ENCODE measurements at regions of chr1 and their contacts with region 1.

Region 1: DNA sequence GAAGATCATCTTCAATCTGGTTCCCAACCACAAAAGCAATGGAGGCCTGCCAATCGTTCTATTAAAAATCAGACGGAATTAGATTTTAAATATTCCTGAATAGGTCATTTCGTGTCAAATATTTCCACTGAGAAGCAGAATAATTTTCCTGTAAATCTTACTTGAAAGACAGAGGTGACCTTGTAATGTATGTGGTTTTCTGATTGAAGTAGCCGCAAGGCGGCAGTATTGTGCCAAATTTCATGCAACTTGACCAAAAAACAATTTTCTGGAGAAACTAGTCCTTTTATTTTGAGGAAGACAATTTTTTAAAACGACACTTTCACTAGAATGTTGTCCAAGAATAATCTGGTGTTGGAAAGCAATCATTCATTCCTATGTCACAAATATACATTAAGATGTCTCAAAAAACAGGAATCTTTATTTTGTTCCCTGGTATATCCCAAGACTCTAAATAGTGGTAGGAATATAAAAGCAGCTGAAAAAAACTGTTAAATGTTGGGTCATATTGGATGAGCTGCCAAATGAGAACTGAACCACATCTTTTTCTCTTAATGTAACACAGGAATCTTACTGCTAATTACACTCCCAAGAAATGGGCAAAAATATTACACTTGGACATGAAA is 33.6 kb downstream of the SPAG17 start:
- DNase-seq: peak; percentile 67
- ATAC-seq: no peak
- H3K4me3 ChIP-seq: no peak overlapping the region
- H3K27ac ChIP-seq: no peak overlapping the region
- H3K4me1 ChIP-seq: peaks cover 3% of the 10 kb centered on the region
- H3K27me3 ChIP-seq: no peaks in the 10 kb centered on the region
- CTCF ChIP-seq: peak; percentile 78
- POLR2A ChIP-seq: no peak
- RAD21 ChIP-seq: peak; percentile 72

Region 2: GRCh38 chr1:117967477-117967876 is 183.9 kb before region 1 on chr1:
- CTCF ChIA-PET with region 1: no interaction called
- POLR2A ChIA-PET with region 1: no interaction called
- dilution Hi-C with region 1: no loop called
- in situ Hi-C with region 1: no loop called
- intact Hi-C with region 1: loop called (anchors 5 kb)
- DNase-seq: peak; percentile 65
- ATAC-seq: peak; percentile 91
- H3K4me3 ChIP-seq: no peak overlapping the region
- H3K27ac ChIP-seq: no peak overlapping the region
- H3K4me1 ChIP-seq: no peaks in the 10 kb centered on the region
- H3K27me3 ChIP-seq: no peaks in the 10 kb centered on the region; the same call in 1 of the 2 replicates
- CTCF ChIP-seq: peak; percentile 32
- POLR2A ChIP-seq: no peak
- RAD21 ChIP-seq: 0 out of 2 replicates have a peak, but pooled peaks have one; percentile 21

Region 3: GRCh38 chr1:118247593-118247992 is 96.2 kb after region 1 on chr1:
- CTCF ChIA-PET with region 1: interaction called, 4 read pairs
- POLR2A ChIA-PET with region 1: no interaction called
- dilution Hi-C with region 1: no loop called
- in situ Hi-C with region 1: no loop called
- intact Hi-C with region 1: loop called (anchors 2 kb)
- DNase-seq: peak; percentile 10
- ATAC-seq: peak; percentile 64; the same call in 1 of the 2 replicates
- H3K4me3 ChIP-seq: no peak overlapping the region
- H3K27ac ChIP-seq: no peak overlapping the region
- H3K4me1 ChIP-seq: no peaks in the 10 kb centered on the region
- H3K27me3 ChIP-seq: no peaks in the 10 kb centered on the region; the same call in 1 of the 2 replicates
- CTCF ChIP-seq: peak; percentile 47
- POLR2A ChIP-seq: no peak
- RAD21 ChIP-seq: peak; percentile 38

Region 4: DNA sequence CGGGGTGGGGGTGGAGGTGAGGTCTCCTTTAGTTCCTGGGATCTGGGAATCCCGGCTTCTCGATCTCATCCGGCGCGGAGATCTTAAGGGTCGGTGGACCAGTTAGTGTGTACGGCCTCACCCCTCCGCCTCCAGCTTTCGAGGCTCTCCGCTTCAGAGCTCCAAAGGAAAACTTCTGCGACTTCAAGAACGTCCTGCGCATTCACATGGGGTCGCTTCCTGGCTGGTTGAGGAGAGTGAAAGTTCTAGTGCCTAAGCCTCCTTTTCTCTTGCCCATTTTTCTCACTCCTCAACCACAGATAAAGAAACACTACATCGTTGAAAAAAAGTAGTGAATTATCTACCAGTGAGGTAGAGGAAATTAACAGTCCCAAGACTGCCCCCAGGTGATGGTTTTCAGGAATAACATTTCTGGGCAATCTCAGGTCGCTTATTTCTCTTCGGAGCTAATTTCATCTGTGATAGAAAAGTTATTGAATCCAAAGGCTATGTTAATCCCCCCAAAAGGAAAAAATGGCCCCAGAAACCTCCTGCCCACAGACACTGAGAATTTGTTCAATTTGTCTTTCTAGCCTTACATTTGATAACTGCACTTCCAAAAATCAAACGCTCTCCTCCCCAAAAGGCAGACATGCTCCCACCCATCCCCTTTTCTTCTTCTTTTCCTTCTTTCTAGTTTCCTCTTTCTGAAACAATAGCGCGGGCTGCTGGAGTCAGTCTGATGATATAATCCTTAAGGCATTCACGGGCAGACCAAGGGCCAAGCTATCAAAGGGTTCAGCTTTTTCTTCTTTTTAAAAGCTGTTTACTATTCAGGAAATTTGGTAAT is 857.3 kb after region 1 on chr1:
- CTCF ChIA-PET with region 1: interaction called, 5 read pairs
- POLR2A ChIA-PET with region 1: no interaction called
- dilution Hi-C with region 1: no loop called
- in situ Hi-C with region 1: no loop called
- intact Hi-C with region 1: loop called (anchors 1 kb)
- DNase-seq: peak; percentile 54
- ATAC-seq: peak; percentile 82
- H3K4me3 ChIP-seq: peak overlapping the region; percentile 29
- H3K27ac ChIP-seq: no peak overlapping the region
- H3K4me1 ChIP-seq: no peaks in the 10 kb centered on the region; the same call in 1 of the 2 replicates
- H3K27me3 ChIP-seq: peaks cover 58% of the 10 kb centered on the region
- CTCF ChIP-seq: peak; percentile 61
- POLR2A ChIP-seq: no peak
- RAD21 ChIP-seq: peak; percentile 52

Region 5: GRCh38 chr1:119275145-119276134 is 1124.0 kb after region 1 on chr1:
- CTCF ChIA-PET with region 1: no interaction called
- POLR2A ChIA-PET with region 1: no interaction called
- dilution Hi-C with region 1: no loop called
- in situ Hi-C with region 1: no loop called
- intact Hi-C with region 1: loop called (anchors 5 kb)
- DNase-seq: peak; percentile 67
- ATAC-seq: peak; percentile 92
- H3K4me3 ChIP-seq: no peak overlapping the region
- H3K27ac ChIP-seq: no peak overlapping the region
- H3K4me1 ChIP-seq: peaks cover 4% of the 10 kb centered on the region
- H3K27me3 ChIP-seq: peaks cover 2% of the 10 kb centered on the region
- CTCF ChIP-seq: peak; percentile 91
- POLR2A ChIP-seq: no peak
- RAD21 ChIP-seq: peak; percentile 82

Measured in IMR-90 (cell line).